H1 (cell line): ENCODE measurements at regions of chr17 and their contacts with region 1.

Region 1: DNA sequence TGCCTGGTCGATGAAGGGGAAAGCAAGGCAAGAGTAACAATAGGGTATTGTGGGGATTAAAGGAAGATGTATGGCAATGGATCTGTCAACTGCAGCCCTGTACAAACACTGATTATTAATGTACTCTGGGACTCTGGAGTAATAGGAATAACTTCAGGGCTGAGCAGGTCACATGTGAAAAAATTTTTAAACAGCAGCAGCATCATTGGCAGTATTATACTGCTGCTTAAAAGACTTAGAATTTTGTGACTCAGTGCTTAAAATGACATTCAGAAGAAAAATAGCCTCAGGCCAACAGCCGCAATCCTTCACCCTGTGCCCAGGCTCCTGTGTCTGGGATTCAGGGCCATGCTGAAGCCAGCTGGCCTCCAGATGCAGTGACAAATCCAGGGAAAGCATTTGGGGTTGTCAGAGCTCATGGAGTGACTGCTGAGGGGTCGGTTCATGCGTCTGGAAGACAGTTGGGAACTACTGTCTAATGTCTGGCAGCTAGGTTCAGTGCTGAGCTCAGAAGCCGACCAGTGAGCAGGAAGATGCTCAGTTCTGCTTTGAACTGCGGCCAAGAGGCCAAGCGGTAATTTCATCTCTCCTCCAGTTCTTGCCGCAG is 22.2 kb downstream of the TEX2 start:
- DNase-seq: no peak
- H3K4me3 ChIP-seq: no peak overlapping the region
- H3K27ac ChIP-seq: no peak overlapping the region
- H3K4me1 ChIP-seq: peaks cover 2 to 9% (median 5%) of the 10 kb centered on the region in 4 experiments; a peak in 6 of 7 replicates
- H3K27me3 ChIP-seq: no peaks in the 10 kb centered on the region
- CTCF ChIP-seq: no peak
- EP300 ChIP-seq: no peak
- POLR2A ChIP-seq: no peak
- RAD21 ChIP-seq: no peak

Region 2: GRCh38 chr17:64192589-64192988 is 48.3 kb before region 1 on chr17:
- CTCF ChIA-PET with region 1: interaction called, 16 read pairs
- POLR2A ChIA-PET with region 1: no interaction called
- DNase-seq: no peak
- H3K4me3 ChIP-seq: no peak overlapping the region
- H3K27ac ChIP-seq: no peak overlapping the region
- H3K4me1 ChIP-seq: peaks cover 0 to 2% (median 0%) of the 10 kb centered on the region in 4 experiments; a peak in 1 of 7 replicates
- H3K27me3 ChIP-seq: no peaks in the 10 kb centered on the region
- CTCF ChIP-seq: no peak
- EP300 ChIP-seq: no peak
- POLR2A ChIP-seq: no peak
- RAD21 ChIP-seq: no peak

Region 3: GRCh38 chr17:64216338-64217248 is 24.3 kb before region 1 on chr17:
- CTCF ChIA-PET with region 1: interaction called, 34 read pairs
- POLR2A ChIA-PET with region 1: no interaction called
- DNase-seq: peak in 1 of 2 experiments; percentile 55
- H3K4me3 ChIP-seq: no peak overlapping the region
- H3K27ac ChIP-seq: no peak overlapping the region; the same call in 1 of the 2 replicates
- H3K4me1 ChIP-seq: peaks cover 0 to 8% (median 6%) of the 10 kb centered on the region in 4 experiments; a peak in 6 of 7 replicates
- H3K27me3 ChIP-seq: no peaks in the 10 kb centered on the region
- CTCF ChIP-seq: peak; percentile 35 to 54 (median 46)
- EP300 ChIP-seq: no peak
- POLR2A ChIP-seq: no peak
- RAD21 ChIP-seq: peak; percentile 25 to 39; a peak in 2 of 4 replicates

Region 4: DNA sequence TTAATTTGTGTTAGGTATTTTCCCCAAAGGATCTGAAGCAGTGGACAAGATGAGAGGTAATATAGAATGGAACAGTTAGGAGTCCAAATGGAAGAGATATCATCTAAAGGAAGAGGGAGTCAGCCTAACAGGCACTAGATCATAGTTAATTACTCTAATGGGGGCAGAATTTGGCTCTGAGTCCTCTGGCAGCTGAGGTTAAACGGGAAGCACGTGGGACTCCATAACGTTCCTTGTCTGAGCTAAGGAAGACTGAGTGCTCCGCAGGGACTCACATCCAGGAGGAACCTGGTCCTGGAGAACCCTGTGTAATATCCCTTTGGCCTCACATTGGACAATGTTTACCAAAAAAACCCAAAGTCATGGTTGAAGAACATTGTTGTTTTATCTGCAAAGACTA is 68.9 kb after region 1 on chr17:
- CTCF ChIA-PET with region 1: no interaction called
- POLR2A ChIA-PET with region 1: no interaction called
- DNase-seq: no peak
- H3K4me3 ChIP-seq: no peak overlapping the region
- H3K27ac ChIP-seq: no peak overlapping the region
- H3K4me1 ChIP-seq: no peaks in the 10 kb centered on the region
- H3K27me3 ChIP-seq: no peaks in the 10 kb centered on the region
- CTCF ChIP-seq: no peak
- EP300 ChIP-seq: no peak
- POLR2A ChIP-seq: no peak
- RAD21 ChIP-seq: no peak

Region 5: GRCh38 chr17:64320613-64321553 is 80.0 kb after region 1 on chr17:
- CTCF ChIA-PET with region 1: no interaction called
- POLR2A ChIA-PET with region 1: no interaction called
- DNase-seq: peak; percentile 58 to 74
- H3K4me3 ChIP-seq: no peak overlapping the region
- H3K27ac ChIP-seq: no peak overlapping the region
- H3K4me1 ChIP-seq: no peaks in the 10 kb centered on the region
- H3K27me3 ChIP-seq: no peaks in the 10 kb centered on the region
- CTCF ChIP-seq: peak; percentile 11 to 86 (median 86)
- EP300 ChIP-seq: no peak
- POLR2A ChIP-seq: no peak
- RAD21 ChIP-seq: peak; percentile 73 to 83

Region 6: DNA sequence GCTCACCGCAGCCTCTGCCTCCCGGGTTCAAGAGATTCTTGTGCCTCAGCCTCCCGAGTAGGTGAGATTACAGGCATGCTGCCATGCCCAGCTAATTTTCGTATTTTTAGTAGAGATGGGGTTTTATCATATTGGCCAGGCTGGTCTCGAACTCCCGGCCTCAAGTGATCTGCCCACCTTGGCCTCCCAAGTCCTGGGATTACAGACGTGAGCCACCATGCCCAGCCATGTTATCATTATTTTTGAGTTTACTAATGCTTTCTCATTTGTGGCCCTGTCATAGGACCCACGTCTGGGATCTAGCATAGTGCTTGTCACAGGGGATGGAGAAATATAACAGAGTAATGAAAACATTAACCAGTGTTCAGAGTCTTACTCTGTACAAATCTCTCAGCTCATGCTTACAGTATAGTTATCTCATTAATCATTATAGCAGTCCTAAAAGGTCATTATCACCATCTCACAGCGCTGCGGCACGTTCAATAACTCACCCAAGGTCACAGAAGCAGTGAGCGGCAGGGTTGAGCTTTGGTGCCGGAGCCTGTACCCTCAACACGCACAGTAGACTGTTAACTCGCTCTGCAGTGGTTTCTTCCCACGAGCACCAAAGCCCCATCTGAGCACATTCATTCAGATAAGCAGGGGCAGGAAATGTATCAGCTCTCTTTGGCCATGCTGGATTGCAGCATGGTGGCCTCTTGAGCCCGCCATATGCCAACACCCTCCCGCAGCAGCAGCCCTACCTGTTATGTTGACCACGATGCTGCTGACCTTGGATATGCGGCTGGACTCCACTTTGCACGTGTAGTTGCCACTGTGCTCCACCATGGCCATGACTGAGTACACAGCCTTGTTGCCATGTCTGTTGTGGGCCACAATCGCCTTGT is 128.4 kb after region 1 on chr17:
- CTCF ChIA-PET with region 1: no interaction called
- POLR2A ChIA-PET with region 1: no interaction called
- DNase-seq: no peak
- H3K4me3 ChIP-seq: no peak overlapping the region
- H3K27ac ChIP-seq: no peak overlapping the region
- H3K4me1 ChIP-seq: no peaks in the 10 kb centered on the region
- H3K27me3 ChIP-seq: no peaks in the 10 kb centered on the region; a peak in 1 of 7 replicates
- CTCF ChIP-seq: no peak
- EP300 ChIP-seq: no peak
- POLR2A ChIP-seq: no peak
- RAD21 ChIP-seq: no peak